ENCODE measurements at regions of chr12 and their contacts with region 1.

Region 1: GRCh38 chr12:119988782-119989668 is at the start of gene BICDL1:
- DNase-seq: peak; percentile 94 to 100 (median 98)
- ATAC-seq: peak; percentile 80
- H3K4me3 ChIP-seq: peak within 1 kb of the TSS; percentile 70
- H3K4me3 Mint-ChIP-seq: peak within 1 kb of the TSS; percentile 95
- H3K27ac ChIP-seq: peak within 1 kb of the TSS; percentile 76 to 90
- H3K27ac Mint-ChIP-seq: peak within 1 kb of the TSS; percentile 97
- H3K4me1 ChIP-seq: peaks cover 24% of the 10 kb centered on the region
- H3K4me1 Mint-ChIP-seq: peaks cover 42% of the 10 kb centered on the region
- H3K27me3 ChIP-seq: no peaks in the 10 kb centered on the region
- H3K27me3 Mint-ChIP-seq: no peaks in the 10 kb centered on the region
- CTCF ChIP-seq: no peak
- total RNA-seq, gene BICDL1: 143 to 146 TPM

Region 2: DNA sequence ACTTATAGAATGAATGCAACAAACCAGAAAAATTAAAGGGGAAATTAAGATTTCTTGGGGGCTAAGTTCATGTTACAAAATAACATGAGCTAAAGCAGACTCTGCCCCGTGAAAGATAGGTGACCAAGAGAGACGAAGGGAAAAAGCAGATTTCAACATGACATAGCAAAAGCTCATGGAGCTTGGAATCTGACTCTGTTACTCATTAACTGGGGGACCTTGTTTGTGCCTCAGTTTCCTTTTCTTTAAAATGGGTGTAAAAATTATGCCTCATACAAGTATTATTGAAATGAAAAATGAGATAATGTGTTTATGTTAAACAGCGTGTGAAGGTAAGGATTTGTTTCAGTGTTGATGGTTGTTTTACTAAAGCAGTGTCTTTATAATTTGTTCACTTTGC is 11.5 kb after region 1 on chr12:
- CTCF ChIA-PET with region 1: interaction called, 21 read pairs
- POLR2A ChIA-PET with region 1: interaction called, 106 read pairs
- intact Hi-C with region 1: no loop called
- DNase-seq: no peak
- ATAC-seq: no peak
- H3K4me3 ChIP-seq: no peak overlapping the region
- H3K4me3 Mint-ChIP-seq: no peak overlapping the region
- H3K27ac ChIP-seq: no peak overlapping the region
- H3K27ac Mint-ChIP-seq: peak overlapping the region; percentile 11
- H3K4me1 ChIP-seq: peaks cover 4% of the 10 kb centered on the region
- H3K4me1 Mint-ChIP-seq: peaks cover 26% of the 10 kb centered on the region
- H3K27me3 ChIP-seq: no peaks in the 10 kb centered on the region
- H3K27me3 Mint-ChIP-seq: no peaks in the 10 kb centered on the region
- CTCF ChIP-seq: no peak

Region 3: DNA sequence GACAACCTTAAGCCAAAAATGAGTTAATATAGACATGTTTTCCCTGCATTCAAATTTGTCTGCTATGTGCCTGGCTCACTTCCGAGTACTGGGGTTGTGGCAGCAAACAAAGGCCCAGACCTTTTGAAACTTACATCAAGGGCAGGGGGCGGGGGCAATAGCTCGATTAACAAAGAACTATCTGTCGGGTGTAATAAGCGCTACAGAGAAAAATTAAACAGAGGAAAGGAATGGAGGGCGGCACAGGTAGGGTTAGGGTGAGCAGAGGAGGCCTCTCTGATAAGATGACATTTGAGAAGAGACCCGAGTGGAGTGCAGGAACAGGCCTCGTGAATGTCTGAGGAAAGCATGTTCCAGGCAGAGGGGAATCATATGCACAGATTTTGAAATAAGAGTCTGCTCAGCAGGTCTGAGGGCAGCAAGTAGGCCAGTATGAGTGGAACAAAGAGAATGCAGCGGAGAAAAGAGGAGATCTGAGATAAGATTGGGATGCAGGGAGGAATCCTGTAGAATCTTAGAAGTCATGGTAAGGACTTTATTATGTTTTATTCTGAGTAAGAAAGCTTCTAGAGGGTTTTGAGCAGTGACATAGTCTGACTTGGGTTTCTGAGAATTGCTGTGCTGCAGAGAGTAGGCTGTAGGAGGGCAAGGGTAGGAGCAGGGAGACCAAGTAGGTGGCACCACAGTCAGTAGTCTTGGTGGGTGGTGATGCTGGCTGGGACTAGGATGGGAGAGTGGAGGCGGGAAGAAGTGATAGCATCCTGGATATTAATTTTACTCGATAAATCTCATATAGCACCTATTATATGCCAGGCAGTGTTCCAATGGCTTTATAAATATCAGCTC is 52.6 kb after region 1 on chr12:
- CTCF ChIA-PET with region 1: no interaction called
- POLR2A ChIA-PET with region 1: interaction called, 6 read pairs
- intact Hi-C with region 1: loop called (anchors 1 to 10 kb)
- DNase-seq: peak; percentile 23 to 79 (median 56)
- ATAC-seq: peak; percentile 92
- H3K4me3 ChIP-seq: no peak overlapping the region
- H3K4me3 Mint-ChIP-seq: peak overlapping the region; percentile 6
- H3K27ac ChIP-seq: no peak overlapping the region
- H3K27ac Mint-ChIP-seq: peak overlapping the region; percentile 87
- H3K4me1 ChIP-seq: peaks cover 13% of the 10 kb centered on the region
- H3K4me1 Mint-ChIP-seq: peaks cover 31% of the 10 kb centered on the region
- H3K27me3 ChIP-seq: no peaks in the 10 kb centered on the region
- H3K27me3 Mint-ChIP-seq: no peaks in the 10 kb centered on the region
- CTCF ChIP-seq: no peak

Region 4: DNA sequence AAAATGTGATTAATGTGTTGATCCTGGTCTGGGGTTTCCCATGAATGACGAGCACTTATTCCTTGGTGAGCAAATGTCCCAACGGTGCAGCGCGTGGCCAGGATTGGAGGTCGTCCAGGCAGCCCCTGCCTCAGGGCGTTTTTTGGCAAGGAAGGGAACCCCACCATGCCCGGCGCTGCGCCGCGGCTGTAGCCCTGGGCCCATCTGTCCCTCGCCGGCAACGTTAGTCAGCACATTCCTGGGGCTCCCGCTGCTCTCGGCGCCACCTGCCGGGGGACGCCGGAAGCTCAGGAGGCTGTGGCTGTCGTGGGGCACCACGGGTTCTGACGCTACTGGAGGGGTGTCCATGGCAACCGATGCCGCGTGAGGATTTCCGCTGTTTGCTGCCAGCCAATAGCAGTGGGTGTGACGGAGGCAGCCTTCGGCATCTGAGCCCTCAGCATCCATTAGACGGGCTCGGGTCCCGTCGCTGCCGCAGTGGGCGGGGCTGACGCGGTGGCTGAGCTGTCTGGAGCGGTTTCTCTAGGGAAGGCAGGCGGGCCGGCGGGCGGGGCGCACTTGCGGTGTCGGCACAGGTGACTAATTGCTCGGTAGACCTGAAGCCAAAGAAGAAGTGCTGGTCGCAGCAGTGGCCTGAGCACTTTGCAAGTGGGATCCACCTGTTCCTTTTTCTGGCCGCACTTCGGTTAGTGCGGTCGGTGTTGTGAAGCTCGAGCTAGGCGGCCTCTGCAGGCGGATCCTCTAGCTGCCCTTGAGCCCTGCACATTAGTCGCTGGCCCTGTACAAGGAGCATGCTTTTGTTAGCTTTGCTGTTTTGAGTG is 98.0 kb after region 1 on chr12:
- CTCF ChIA-PET with region 1: interaction called, 31 read pairs
- POLR2A ChIA-PET with region 1: interaction called, 70 read pairs
- intact Hi-C with region 1: loop called (anchors 1 kb)
- DNase-seq: peak; percentile 98 to 100 (median 99)
- ATAC-seq: peak; percentile 94
- H3K4me3 ChIP-seq: peak overlapping the region; percentile 52
- H3K4me3 Mint-ChIP-seq: peak overlapping the region; percentile 80
- H3K27ac ChIP-seq: peak overlapping the region; percentile 29 to 69
- H3K27ac Mint-ChIP-seq: peak overlapping the region; percentile 83
- H3K4me1 ChIP-seq: peaks cover 14% of the 10 kb centered on the region
- H3K4me1 Mint-ChIP-seq: peaks cover 18% of the 10 kb centered on the region
- H3K27me3 ChIP-seq: no peaks in the 10 kb centered on the region
- H3K27me3 Mint-ChIP-seq: no peaks in the 10 kb centered on the region
- CTCF ChIP-seq: peak; percentile 96

Region 5: DNA sequence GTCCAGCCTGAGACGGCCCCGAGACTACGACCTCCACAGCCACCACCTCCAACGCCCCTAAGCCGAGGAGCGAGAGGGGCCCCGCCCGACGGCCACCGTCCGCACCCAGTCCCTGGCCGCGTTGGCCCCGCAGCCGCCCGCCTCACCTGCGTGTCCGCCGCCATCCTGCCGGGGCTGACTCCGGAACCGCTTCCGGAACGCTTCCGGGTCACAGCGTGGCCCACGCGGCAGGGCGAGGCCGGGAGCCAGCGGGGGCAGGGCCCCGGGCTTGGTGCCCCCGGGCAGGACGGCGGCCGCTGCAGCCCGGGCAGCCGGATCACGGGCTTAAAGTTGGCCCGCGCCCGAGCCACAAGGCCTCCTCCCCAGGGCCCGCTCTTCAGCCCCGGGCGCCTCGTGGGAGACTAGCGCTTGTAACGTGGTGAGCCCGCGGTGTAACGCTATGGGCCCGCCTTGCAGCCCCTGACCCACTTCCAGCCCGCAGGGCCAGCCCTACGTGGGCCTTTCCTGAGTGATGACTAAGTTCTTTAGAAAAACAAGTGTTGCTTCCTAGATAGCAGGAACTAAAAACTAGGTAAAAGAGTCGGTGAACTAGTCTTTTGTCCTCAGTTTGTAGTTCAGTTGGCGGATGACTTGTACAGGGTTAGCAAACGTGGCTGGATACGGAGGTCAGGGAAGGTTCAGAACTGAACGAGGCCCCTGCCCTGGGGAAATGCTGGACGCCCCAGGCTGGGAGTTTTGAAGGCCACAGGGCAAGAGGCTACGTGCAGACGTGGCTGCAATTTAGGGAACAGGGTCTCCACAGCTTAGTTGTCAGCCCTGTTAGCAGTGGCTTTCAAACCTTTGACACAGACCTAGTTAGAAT is 205.7 kb after region 1 on chr12 and contains the start of gene GCN1:
- CTCF ChIA-PET with region 1: no interaction called
- POLR2A ChIA-PET with region 1: no interaction called
- intact Hi-C with region 1: loop called in 1 of 2 experiments (anchors 10 kb)
- DNase-seq: peak; percentile 75 to 92 (median 86)
- ATAC-seq: peak; percentile 88
- H3K4me3 ChIP-seq: peak within 1 kb of the TSS; percentile 64
- H3K4me3 Mint-ChIP-seq: peak within 1 kb of the TSS; percentile 95
- H3K27ac ChIP-seq: peak within 1 kb of the TSS; percentile 75 to 86
- H3K27ac Mint-ChIP-seq: peak within 1 kb of the TSS; percentile 98
- H3K4me1 ChIP-seq: peaks cover 49% of the 10 kb centered on the region
- H3K4me1 Mint-ChIP-seq: peaks cover 45% of the 10 kb centered on the region
- H3K27me3 ChIP-seq: no peaks in the 10 kb centered on the region
- H3K27me3 Mint-ChIP-seq: no peaks in the 10 kb centered on the region
- CTCF ChIP-seq: no peak
- total RNA-seq, gene GCN1: 121 to 128 TPM

Measured in CD4-positive, alpha-beta T cell (primary cell).